ENCODE measurements at regions of chr3 and their contacts with region 1.

Region 1: GRCh38 chr3:151305101-151305750 is 11.4 kb downstream of the GPR87 start:
- DNase-seq: peak; percentile 37
- H3K4me3 Mint-ChIP-seq: no peak overlapping the region
- H3K27ac Mint-ChIP-seq: no peak overlapping the region
- H3K4me1 Mint-ChIP-seq: peaks cover 59% of the 10 kb centered on the region
- H3K27me3 Mint-ChIP-seq: peaks cover 18% of the 10 kb centered on the region

Region 2: DNA sequence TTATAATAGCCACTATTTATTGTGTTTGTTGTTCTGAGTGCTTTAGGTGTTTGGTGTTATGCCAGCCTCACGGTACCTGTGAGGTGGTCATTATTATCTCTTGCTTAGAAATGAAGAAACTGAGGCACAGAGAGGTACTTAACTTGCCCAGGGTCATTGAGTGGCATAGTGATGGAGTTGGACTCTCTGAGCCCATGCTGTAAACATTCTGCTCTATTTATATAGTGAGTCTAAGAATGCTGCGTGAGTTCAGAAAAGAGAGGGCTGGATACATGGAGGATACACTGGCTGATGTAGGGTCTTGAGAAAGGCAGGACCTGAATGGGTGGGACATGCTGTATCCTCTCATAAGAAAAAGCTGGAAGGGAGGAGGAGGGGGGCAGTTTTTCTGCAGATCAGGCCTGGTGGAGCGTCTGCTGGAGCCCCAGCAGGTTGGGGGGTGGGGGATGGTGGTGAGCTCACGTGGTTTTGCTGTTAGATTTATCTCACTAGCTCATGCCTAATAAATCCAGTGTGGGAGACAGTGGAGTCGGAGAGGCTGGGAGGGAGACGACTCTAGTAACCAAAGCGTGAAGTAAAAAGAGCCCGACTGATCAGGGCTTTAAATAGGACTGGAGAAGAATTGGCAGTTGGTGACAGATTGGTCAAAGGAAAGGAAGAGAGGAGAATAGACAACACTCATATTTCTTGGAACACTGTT is 203.8 kb before region 1 on chr3:
- CTCF ChIA-PET with region 1: no interaction called
- intact Hi-C with region 1: no loop called
- DNase-seq: no peak
- H3K4me3 Mint-ChIP-seq: no peak overlapping the region
- H3K27ac Mint-ChIP-seq: no peak overlapping the region
- H3K4me1 Mint-ChIP-seq: no peaks in the 10 kb centered on the region
- H3K27me3 Mint-ChIP-seq: peaks cover 18% of the 10 kb centered on the region

Region 3: DNA sequence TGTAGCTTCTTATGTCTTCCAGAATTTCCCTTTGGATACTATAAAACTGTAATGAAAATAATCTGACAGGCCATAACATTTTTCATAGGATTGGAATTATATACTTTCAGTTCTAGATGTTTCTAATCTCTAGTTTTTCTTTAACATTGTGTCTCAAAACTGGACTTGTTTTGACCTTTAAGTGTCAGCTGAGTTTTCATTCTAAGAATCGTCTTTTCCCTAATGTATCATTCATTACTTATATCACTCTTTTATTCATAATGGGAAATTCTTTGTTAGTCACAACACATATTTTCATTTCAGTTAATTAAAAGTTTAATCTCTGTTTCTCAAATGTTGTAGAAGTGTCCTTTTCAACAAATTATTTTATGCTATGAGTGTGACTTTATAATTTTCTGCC is 114.1 kb before region 1 on chr3:
- CTCF ChIA-PET with region 1: interaction called, 3 read pairs
- intact Hi-C with region 1: loop called (anchors 1 kb)
- DNase-seq: no peak
- H3K4me3 Mint-ChIP-seq: peak overlapping the region; percentile 41
- H3K27ac Mint-ChIP-seq: peak overlapping the region; percentile 93
- H3K4me1 Mint-ChIP-seq: peaks cover 68% of the 10 kb centered on the region
- H3K27me3 Mint-ChIP-seq: no peaks in the 10 kb centered on the region

Region 4: GRCh38 chr3:151210676-151211381 is 94.4 kb before region 1 on chr3:
- CTCF ChIA-PET with region 1: interaction called, 5 read pairs
- intact Hi-C with region 1: loop called (anchors 1 kb)
- DNase-seq: peak; percentile 31
- H3K4me3 Mint-ChIP-seq: peak overlapping the region; percentile 48
- H3K27ac Mint-ChIP-seq: peak overlapping the region; percentile 90
- H3K4me1 Mint-ChIP-seq: peaks cover 56% of the 10 kb centered on the region
- H3K27me3 Mint-ChIP-seq: no peaks in the 10 kb centered on the region

Region 5: DNA sequence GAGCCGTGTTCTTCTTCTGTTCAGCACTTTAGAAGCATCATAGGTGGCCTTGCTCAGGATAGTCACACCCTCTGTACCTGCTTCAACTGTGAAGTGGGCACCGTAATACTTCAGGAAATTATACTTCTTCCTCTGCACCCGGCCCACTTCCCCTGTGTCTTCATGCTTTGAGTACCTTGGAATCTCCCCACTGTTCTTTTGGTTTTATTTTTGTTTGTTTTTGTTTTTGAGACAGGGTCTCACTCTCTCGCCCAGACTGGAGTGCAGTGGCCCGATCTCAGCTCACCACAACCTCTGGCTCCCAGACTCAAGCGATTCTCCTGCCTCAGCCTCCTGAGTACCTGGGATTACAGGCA is 28.6 kb before region 1 on chr3:
- CTCF ChIA-PET with region 1: interaction called, 10 read pairs
- intact Hi-C with region 1: loop called (anchors 1 kb)
- DNase-seq: peak; percentile 77
- H3K4me3 Mint-ChIP-seq: peak overlapping the region; percentile 55
- H3K27ac Mint-ChIP-seq: peak overlapping the region; percentile 85
- H3K4me1 Mint-ChIP-seq: peaks cover 39% of the 10 kb centered on the region
- H3K27me3 Mint-ChIP-seq: no peaks in the 10 kb centered on the region

Region 6: GRCh38 chr3:151290673-151291072 is 14.6 kb before region 1 on chr3:
- CTCF ChIA-PET with region 1: interaction called, 11 read pairs
- intact Hi-C with region 1: no loop called
- DNase-seq: no peak
- H3K4me3 Mint-ChIP-seq: no peak overlapping the region
- H3K27ac Mint-ChIP-seq: no peak overlapping the region
- H3K4me1 Mint-ChIP-seq: peaks cover 2% of the 10 kb centered on the region
- H3K27me3 Mint-ChIP-seq: peaks cover 2% of the 10 kb centered on the region

Region 7: GRCh38 chr3:151316267-151316991 is 11.2 kb after region 1 on chr3 and contains the start of gene GPR87:
- CTCF ChIA-PET with region 1: interaction called, 4 read pairs
- intact Hi-C with region 1: loop called (anchors 1 kb)
- DNase-seq: peak; percentile 48
- H3K4me3 Mint-ChIP-seq: no peak within 1 kb of the TSS
- H3K27ac Mint-ChIP-seq: no peak within 1 kb of the TSS
- H3K4me1 Mint-ChIP-seq: peaks cover 12% of the 10 kb centered on the region
- H3K27me3 Mint-ChIP-seq: no peaks in the 10 kb centered on the region
- total RNA-seq, gene GPR87: 0.19 TPM in 1 of 2 experiments, not detected in the other

Region 8: DNA sequence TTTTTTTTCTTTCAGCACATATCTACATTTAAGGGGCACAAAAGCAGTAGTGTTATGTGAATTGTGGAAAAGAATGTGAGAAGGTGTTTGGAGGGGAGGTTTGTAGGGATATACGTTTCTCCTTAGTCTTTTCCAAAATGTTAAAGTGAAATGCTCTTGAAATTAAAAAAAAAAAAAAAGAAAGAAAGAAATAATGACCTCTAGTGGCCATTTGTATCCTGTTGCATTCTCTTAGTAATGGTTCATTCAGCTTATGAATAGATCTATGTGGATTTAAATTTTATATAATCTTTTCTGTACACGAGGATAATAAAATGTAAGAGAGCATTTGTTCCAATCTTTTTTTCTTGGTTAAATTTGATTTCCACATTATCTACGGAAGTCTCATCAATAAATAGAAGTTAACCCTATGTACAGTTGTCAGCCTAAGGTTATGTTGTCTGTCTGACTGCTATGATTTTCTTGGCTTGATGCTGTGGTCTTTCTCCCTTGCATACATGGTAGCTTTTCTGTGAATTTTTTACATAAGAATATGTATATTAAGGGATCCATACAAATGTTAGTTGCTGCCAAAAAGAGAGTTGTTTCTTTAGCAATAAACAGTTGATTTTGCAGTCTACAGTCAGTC is 22.5 kb after region 1 on chr3:
- CTCF ChIA-PET with region 1: interaction called, 35 read pairs
- intact Hi-C with region 1: no loop called
- DNase-seq: no peak
- H3K4me3 Mint-ChIP-seq: no peak overlapping the region
- H3K27ac Mint-ChIP-seq: no peak overlapping the region
- H3K4me1 Mint-ChIP-seq: peaks cover 7% of the 10 kb centered on the region
- H3K27me3 Mint-ChIP-seq: peaks cover 4% of the 10 kb centered on the region

Region 9: DNA sequence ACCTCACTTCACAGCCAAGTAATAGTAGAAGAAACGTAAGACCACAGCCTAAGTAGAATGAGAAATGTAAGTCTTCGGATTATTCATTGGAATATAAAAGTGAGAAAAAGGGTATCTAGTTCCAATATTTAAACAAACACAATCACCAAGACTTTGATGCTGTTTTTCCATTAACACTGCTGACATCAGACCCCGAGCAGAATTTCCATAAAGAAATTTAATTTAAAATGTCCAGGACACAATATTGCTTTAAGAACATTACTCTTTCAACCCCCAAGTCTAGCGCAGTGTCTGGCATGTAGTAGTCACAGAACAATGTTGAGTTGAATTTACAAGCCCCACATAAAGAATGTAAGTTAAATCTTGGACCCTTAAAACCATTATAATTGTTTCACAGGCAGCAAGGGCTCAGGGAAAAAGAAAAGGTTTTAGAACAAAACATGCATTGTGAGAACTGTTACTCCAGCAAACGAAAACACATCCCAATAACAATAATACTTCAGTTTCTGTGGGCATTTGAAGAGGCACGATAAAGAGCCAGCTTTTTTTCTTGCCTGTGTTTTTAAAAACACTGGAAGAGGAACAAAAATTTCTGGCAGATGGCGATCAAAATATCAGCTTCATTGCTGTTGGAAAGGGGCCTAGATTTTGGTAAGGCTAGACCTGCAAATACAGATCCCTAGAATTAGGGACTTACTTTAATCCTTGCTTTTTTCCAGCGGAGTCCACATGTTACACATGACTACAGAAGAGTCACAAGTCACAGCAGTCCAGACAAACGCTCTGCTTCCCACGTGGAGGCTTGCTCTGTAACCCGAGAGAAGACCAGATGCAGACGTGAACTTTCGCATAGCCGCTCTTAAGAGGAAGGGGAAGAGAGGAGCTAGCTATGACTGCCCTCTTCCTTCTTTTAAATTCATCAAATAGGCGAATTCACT is 233.5 kb after region 1 on chr3:
- CTCF ChIA-PET with region 1: no interaction called
- intact Hi-C with region 1: no loop called
- DNase-seq: no peak
- H3K4me3 Mint-ChIP-seq: no peak overlapping the region
- H3K27ac Mint-ChIP-seq: no peak overlapping the region
- H3K4me1 Mint-ChIP-seq: no peaks in the 10 kb centered on the region
- H3K27me3 Mint-ChIP-seq: no peaks in the 10 kb centered on the region